Heart right ventricle (tissue), 16 donors: ENCODE measurements at regions of chr4 and their contacts with region 1.

Region 1: GRCh38 chr4:11720292-11720691 is 291.6 kb upstream of the HS3ST1 start:
- DNase-seq: peak in 1 of 2 donors; percentile 7
- ATAC-seq: peak in 3 of 8 donors; percentile 48 to 66 (median 56)
- H3K4me3 ChIP-seq: no peak overlapping the region
- H3K27ac ChIP-seq: no peak overlapping the region
- H3K4me1 ChIP-seq: peaks cover 0 to 6% (median 0%) of the 10 kb centered on the region in 9 donors
- H3K27me3 ChIP-seq: no peaks in the 10 kb centered on the region
- CTCF ChIP-seq: peak; percentile 41 to 81 (median 73)

Region 2: GRCh38 chr4:10577018-10577417 is 1143.3 kb before region 1 on chr4:
- intact Hi-C with region 1: loop called in 7 of 10 experiments (anchors 2 to 10 kb)
- DNase-seq: no peak
- ATAC-seq: no peak
- H3K4me3 ChIP-seq: no peak overlapping the region
- H3K27ac ChIP-seq: no peak overlapping the region
- H3K4me1 ChIP-seq: peaks cover 0 to 10% (median 0%) of the 10 kb centered on the region in 9 donors
- H3K27me3 ChIP-seq: peaks cover 0 to 22% (median 0%) of the 10 kb centered on the region in 7 donors
- CTCF ChIP-seq: no peak

Region 3: GRCh38 chr4:10582059-10582686 is 1138.1 kb before region 1 on chr4:
- intact Hi-C with region 1: loop called in 7 of 10 experiments (anchors 2 to 10 kb)
- DNase-seq: peak in 1 of 2 donors; percentile 35
- ATAC-seq: peak in 3 of 8 donors; percentile 45 to 76 (median 56)
- H3K4me3 ChIP-seq: no peak overlapping the region
- H3K27ac ChIP-seq: no peak overlapping the region
- H3K4me1 ChIP-seq: peaks cover 0 to 12% (median 0%) of the 10 kb centered on the region in 9 donors
- H3K27me3 ChIP-seq: peaks cover 0 to 10% (median 0%) of the 10 kb centered on the region in 7 donors
- CTCF ChIP-seq: peak; percentile 27 to 84 (median 78)

Region 4: DNA sequence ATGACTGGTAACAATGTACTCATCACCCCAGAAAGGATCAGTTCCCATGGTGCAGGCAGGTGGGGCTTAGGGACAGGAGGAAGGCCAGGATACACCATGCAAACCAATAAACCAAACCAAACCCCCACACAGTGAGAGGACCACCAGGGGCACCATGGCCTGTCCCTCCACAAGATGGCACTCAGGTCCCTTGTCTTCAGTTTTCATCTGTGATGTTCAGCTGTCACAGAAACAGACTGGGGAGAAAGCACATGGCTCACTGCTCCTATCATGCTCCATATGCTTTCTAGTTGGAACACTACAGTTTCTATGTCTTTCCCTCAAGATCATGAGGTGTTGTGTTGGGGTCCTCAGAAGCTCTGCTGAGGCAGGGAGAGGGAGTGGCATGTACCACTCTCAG is 301.7 kb before region 1 on chr4:
- intact Hi-C with region 1: loop called in 5 of 10 experiments (anchors 5 to 10 kb)
- DNase-seq: no peak
- ATAC-seq: peak in 4 of 8 donors; percentile 33 to 48 (median 38)
- H3K4me3 ChIP-seq: no peak overlapping the region
- H3K27ac ChIP-seq: no peak overlapping the region
- H3K4me1 ChIP-seq: peaks cover 0 to 4% (median 0%) of the 10 kb centered on the region in 9 donors
- H3K27me3 ChIP-seq: peaks cover 0 to 5% (median 0%) of the 10 kb centered on the region in 7 donors
- CTCF ChIP-seq: peak in 8 of 9 donors; percentile 7 to 44 (median 26)

Region 5: DNA sequence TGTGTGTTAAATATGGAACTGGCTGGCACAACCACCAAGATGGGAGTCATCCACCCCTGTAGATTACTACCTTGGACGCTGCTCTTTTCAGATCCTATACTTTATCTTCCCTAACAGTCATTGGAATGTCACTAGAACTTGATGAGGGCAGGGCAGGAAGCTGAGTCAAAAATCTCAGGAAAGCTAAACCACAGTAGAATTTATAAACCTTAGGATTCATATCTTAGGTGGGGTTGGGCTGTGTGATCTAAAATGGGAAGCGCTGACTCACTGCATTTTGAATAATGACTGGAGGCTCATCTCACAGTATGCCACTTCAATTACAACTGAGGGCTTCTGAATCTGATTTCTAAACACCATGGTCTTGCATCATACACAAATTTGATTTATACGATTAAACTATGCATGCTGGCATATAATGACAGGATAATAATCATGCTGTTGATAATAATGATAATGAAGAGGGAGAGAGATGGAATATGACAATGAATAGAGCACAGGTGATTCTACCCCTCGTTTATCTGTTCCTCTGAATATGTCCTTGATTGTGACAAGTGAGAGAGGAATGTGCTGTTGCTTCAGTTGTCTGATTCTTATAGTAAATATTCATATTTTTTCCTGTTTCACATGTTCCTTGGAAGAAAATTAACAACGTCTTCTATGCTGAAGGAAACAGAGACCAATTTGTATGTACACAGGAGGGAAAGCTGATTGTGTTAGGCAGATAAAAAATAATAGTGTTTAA is 21.3 kb before region 1 on chr4:
- intact Hi-C with region 1: no loop called
- DNase-seq: no peak
- ATAC-seq: peak in 6 of 8 donors; percentile 52 to 84 (median 64)
- H3K4me3 ChIP-seq: no peak overlapping the region
- H3K27ac ChIP-seq: peak overlapping the region in 1 of 10 donors; percentile 14
- H3K4me1 ChIP-seq: peaks cover 0 to 22% (median 6%) of the 10 kb centered on the region in 9 donors
- H3K27me3 ChIP-seq: no peaks in the 10 kb centered on the region
- CTCF ChIP-seq: no peak

Region 6: DNA sequence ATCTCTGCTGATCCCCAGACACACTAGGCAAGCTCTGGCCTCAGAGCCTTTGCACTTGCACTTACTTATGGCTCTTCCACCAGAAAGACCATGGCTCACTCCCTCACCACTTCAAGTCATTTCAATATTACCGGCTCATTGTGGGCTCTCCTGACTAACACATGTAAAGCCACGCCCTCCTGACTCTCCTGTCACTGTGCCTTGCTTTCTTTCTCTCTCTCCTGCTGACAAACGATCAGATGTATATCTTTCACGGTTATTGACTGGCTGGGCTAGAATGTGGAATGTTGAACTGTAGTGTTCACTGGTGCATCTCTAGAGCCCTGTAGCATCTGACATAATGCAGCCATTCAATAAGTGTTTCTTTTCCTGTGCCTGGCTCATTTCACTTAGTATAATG is 1338.7 kb after region 1 on chr4:
- intact Hi-C with region 1: no loop called
- DNase-seq: no peak
- ATAC-seq: no peak
- H3K4me3 ChIP-seq: no peak overlapping the region
- H3K27ac ChIP-seq: no peak overlapping the region
- H3K4me1 ChIP-seq: no peaks in the 10 kb centered on the region
- H3K27me3 ChIP-seq: no peaks in the 10 kb centered on the region
- CTCF ChIP-seq: no peak